HCT116 (cell line): ENCODE measurements at regions of chr20 and their contacts with region 1.

Region 1: DNA sequence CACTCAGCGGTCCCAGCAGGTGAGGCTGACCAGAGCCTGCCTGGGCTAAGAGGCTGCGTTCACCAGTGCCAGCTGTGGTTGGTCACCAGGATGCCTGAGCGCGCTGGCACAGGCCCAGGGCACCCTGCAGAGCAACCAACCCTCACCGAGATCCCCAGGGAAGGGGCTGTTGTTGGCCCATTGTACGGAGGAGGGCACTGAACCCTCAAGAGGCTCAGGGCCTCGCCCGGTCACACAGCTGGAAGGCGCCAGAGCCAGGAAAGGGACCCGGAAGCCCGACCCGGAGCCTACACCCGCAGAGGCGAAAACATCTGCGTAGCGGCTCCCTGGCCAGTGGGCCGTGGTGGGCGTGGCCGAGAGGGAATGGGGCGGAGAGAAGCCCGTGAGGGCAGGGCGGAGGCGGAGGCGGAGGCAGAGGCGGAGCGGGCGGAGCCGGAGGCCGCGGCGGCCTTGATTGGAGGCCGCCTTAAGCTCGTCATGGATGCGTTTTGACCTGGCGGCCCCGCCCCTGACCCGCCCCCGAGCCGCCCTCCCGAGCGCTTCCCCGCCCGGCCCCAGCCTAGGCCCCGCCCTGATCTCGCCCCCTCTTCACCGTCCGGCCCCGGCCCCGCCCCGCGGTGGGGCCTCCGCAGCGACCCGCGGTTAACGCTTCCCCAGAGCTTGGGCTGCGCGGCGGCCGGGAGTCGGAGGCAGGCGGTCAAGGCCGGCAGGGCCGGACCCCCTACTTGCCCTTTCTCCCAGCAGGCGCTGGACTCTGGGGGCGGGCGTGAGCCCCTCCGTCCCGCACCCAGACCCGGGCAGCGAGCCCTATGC is 2.2 kb upstream of the MRGBP start:
- DNase-seq: peak; percentile 93
- ATAC-seq: peak; percentile 79
- H3K4me3 ChIP-seq: peak overlapping the region; percentile 64 to 72
- H3K27ac ChIP-seq: peak overlapping the region; percentile 99
- H3K4me1 ChIP-seq: peaks cover 23 to 67% of the 10 kb centered on the region in 2 experiments
- H3K27me3 ChIP-seq: no peaks in the 10 kb centered on the region
- CTCF ChIP-seq: no peak
- POLR2A ChIP-seq: no peak
- RAD21 ChIP-seq: no peak

Region 2: DNA sequence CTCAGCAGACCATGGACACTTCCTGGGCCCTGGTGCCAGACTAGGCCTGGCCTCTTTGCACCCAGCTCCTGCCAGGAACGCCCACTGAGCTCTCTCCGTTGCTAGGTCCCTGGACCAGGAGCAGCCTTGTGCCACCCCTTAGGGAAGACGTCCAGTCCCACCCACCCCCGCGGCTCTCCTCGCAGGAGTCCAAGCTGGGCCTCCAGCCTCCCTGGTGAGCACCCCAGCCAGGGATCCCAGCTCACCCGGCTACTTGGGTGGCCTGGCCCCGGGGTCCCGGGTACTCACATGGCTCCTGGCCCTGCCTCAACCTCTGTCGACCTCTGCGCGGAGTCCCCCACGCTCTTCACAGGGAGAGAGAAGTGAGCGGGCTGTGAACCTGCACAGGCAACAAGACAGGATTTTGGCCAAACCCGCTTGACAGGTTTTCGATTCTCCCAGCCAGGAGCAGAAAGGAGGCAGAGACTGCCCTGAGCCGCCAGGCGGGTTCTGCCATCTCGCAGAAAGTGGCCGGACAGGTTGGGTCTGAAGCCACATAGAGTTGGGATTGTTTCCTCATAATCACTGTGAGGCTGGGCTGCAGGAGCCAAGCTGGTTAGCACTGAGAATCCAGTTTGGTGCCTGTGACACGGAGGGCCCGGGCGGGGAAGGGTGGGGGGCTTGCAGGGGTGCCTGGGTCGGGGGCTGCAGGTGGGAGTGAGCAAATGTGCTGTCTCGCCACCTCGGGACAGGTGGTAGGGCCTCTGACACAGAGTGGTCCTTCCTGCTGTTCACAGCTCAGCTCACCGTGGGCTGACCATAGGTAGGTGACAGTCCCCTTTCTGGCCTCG is 366.7 kb before region 1 on chr20 and contains the start of gene RBBP8NL:
- CTCF ChIA-PET with region 1: no interaction called
- POLR2A ChIA-PET with region 1: no interaction called
- RAD21 ChIA-PET with region 1: no interaction called
- intact Hi-C with region 1: no loop called
- DNase-seq: peak; percentile 77
- ATAC-seq: peak; percentile 89
- H3K4me3 ChIP-seq: peak within 1 kb of the TSS in 1 of 2 experiments; percentile 40; a peak in 2 of 4 replicates
- H3K27ac ChIP-seq: peak within 1 kb of the TSS; percentile 80
- H3K4me1 ChIP-seq: peaks cover 29 to 39% of the 10 kb centered on the region in 2 experiments
- H3K27me3 ChIP-seq: no peaks in the 10 kb centered on the region
- CTCF ChIP-seq: peak in 2 of 3 experiments; percentile 20 to 36; a peak in 3 of 6 replicates
- POLR2A ChIP-seq: no peak
- RAD21 ChIP-seq: no peak; the same call in 1 of the 2 replicates
- total RNA-seq, gene RBBP8NL: 0.59 TPM

Region 3: DNA sequence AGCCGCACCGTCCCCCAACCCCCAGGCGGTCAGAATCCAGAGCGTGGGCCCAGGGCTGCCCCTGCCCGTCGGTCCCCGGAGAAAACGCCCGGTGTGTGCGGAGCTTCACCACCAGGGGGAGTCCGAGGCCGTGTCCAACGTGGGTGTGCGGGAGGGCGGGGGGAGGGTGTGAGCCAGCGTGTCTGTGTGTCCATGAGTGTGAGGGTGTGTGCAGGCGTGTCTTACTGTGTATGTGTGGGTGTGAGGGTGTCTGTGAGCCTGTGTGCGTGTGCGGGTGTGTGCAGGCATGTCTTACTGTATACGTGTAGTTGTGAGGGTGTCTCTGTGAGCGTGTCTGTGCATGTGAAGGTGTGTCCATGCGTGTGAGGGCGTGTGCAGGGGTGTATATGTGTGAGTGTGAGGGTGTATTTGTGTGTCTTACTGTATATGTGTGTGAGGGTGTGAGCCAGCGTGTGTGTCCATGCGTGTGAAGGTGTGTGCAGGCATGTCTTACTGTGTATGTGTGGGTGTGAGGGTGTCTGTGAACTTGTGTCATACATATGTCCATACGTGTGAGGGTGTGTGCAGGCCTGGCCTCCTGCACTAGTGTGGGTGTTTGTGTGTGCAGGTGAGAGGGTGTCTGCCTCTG is 293.8 kb before region 1 on chr20:
- CTCF ChIA-PET with region 1: interaction called, 8 read pairs
- POLR2A ChIA-PET with region 1: no interaction called
- RAD21 ChIA-PET with region 1: no interaction called
- intact Hi-C with region 1: loop called (anchors 5 kb)
- DNase-seq: peak; percentile 21
- ATAC-seq: peak; percentile 88
- H3K4me3 ChIP-seq: no peak overlapping the region
- H3K27ac ChIP-seq: peak overlapping the region; percentile 15; the same call in 1 of the 2 replicates
- H3K4me1 ChIP-seq: peaks cover 6 to 17% of the 10 kb centered on the region in 2 experiments; a peak in 3 of 4 replicates
- H3K27me3 ChIP-seq: no peaks in the 10 kb centered on the region
- CTCF ChIP-seq: peak; percentile 82 to 95 (median 90)
- POLR2A ChIP-seq: no peak
- RAD21 ChIP-seq: peak; percentile 96

Region 4: DNA sequence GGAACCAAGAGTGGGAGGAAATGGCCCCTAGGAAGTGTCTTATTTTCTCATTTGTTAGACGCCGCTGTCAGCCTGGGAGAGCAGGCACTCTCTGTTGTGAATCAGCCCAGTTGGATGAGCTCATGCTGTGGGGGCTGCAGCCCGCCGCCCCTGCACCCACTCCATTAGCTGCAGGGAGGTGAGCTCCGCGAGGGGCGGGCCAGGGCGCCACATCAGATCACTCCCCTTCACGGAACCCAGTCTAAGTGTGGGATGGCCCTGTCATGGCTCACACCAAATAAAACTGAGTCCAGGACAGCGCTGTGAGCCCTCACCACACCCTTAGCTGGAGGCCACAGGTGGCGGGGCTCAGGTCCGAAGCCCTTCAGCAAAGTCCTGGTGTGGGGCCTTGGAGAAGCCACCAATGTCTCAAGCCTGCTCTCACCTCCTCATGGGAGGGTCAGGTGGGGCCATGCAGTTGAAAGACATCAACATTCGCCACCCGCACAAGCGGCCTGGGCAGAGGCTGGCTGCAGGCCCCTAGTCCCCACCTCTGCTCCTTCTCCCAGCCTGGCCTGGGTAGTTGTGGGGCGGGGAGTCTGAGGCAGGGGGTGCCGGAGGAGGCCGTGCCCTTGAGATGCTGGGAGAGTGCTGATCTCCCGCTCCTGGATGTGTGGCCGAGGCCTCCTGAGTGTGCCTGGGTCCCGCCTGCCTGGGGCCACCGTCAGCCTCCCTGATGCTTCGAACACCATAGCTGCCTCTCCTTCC is 218.0 kb before region 1 on chr20:
- CTCF ChIA-PET with region 1: no interaction called
- POLR2A ChIA-PET with region 1: no interaction called
- RAD21 ChIA-PET with region 1: no interaction called
- intact Hi-C with region 1: no loop called
- DNase-seq: no peak
- ATAC-seq: no peak
- H3K4me3 ChIP-seq: no peak overlapping the region
- H3K27ac ChIP-seq: no peak overlapping the region
- H3K4me1 ChIP-seq: peaks cover 3 to 9% of the 10 kb centered on the region in 2 experiments; a peak in 2 of 4 replicates
- H3K27me3 ChIP-seq: peaks cover 14% of the 10 kb centered on the region; the same call in 1 of the 2 replicates
- CTCF ChIP-seq: no peak
- POLR2A ChIP-seq: no peak
- RAD21 ChIP-seq: no peak

Region 5: DNA sequence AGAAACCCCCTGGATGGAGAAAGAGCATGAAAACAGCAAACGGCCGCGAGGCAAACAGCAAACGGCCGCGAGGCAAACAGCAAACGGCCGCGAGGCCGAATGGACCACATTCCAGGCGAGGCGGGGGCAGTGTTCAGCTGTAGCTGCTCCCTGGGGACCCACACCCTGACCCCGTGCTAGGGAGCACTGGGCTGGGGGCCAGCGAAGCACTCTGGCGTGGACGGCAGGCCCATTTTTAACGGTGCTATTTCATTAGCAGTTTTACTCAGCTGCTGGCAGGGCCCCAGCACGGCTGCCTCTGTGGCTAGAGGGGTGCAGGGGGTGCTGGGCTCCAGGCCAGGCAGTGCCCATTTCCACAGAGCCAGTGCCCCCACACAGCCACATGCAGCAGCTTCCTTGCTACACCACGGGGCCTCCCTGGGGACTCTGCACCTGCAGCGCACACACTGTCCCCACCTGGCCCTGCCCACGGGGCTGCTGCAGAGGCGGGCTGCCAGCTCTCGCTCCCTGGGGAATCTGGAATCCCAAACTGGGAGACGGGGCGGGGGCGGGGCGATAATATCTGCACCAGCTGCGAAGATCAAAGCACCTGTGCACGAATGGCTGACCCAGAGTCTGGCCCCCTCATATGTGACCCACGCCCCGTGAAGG is 187.4 kb before region 1 on chr20:
- CTCF ChIA-PET with region 1: no interaction called
- POLR2A ChIA-PET with region 1: no interaction called
- RAD21 ChIA-PET with region 1: no interaction called
- intact Hi-C with region 1: no loop called
- DNase-seq: no peak
- ATAC-seq: no peak
- H3K4me3 ChIP-seq: no peak overlapping the region
- H3K27ac ChIP-seq: no peak overlapping the region
- H3K4me1 ChIP-seq: no peaks in the 10 kb centered on the region; a peak in 1 of 4 replicates
- H3K27me3 ChIP-seq: no peaks in the 10 kb centered on the region
- CTCF ChIP-seq: no peak
- POLR2A ChIP-seq: no peak
- RAD21 ChIP-seq: no peak

Region 6: DNA sequence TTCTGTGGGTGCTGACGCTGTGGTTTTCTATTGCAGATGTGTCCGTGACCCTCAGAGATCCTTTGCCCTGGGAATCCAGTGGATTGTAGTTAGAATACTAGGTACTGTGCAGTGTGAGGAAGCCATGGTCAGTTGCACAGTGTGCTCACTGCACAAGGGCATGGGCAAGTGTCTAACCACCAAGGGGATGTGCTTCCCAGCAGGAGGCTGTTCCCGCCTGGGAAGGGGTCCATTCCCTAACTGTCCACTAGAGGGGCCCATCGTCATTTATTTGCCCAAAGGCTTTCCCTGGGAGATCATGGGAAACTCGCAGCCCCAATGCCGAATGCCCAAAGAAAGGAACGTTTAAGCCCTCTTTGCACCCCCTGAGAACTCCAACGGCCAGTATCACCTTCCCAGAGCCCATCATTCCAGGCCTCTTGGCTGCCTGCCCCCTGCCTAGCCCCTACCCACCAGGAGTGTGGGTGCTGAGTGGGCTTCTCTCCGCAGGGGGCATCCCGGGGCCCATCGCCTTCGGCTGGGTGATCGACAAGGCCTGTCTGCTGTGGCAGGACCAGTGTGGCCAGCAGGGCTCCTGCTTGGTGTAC is 125.6 kb before region 1 on chr20:
- CTCF ChIA-PET with region 1: interaction called, 8 read pairs
- POLR2A ChIA-PET with region 1: no interaction called
- RAD21 ChIA-PET with region 1: interaction called in 1 of 2 experiments, 3 read pairs
- intact Hi-C with region 1: loop called (anchors 1 kb)
- DNase-seq: peak; percentile 24
- ATAC-seq: peak; percentile 65
- H3K4me3 ChIP-seq: no peak overlapping the region
- H3K27ac ChIP-seq: peak overlapping the region; percentile 34; the same call in 1 of the 2 replicates
- H3K4me1 ChIP-seq: peaks cover 6 to 24% of the 10 kb centered on the region in 2 experiments; a peak in 2 of 4 replicates
- H3K27me3 ChIP-seq: no peaks in the 10 kb centered on the region
- CTCF ChIP-seq: peak; percentile 76 to 85 (median 81)
- POLR2A ChIP-seq: no peak
- RAD21 ChIP-seq: peak; percentile 89

Region 7: GRCh38 chr20:62734881-62735821 is 59.0 kb before region 1 on chr20:
- CTCF ChIA-PET with region 1: no interaction called
- POLR2A ChIA-PET with region 1: interaction called, 6 read pairs
- RAD21 ChIA-PET with region 1: interaction called, 4 read pairs
- intact Hi-C with region 1: loop called (anchors 2 kb)
- DNase-seq: peak; percentile 89
- ATAC-seq: peak; percentile 44
- H3K4me3 ChIP-seq: peak overlapping the region; percentile 38 to 43
- H3K27ac ChIP-seq: peak overlapping the region; percentile 100
- H3K4me1 ChIP-seq: peaks cover 86 to 100% of the 10 kb centered on the region in 2 experiments
- H3K27me3 ChIP-seq: no peaks in the 10 kb centered on the region
- CTCF ChIP-seq: peak in 2 of 3 experiments; percentile 19 to 21; a peak in 1 of 6 replicates
- POLR2A ChIP-seq: peak; percentile 51
- RAD21 ChIP-seq: no peak

Region 8: GRCh38 chr20:62808211-62808865 is 14.2 kb after region 1 on chr20:
- CTCF ChIA-PET with region 1: interaction called, 10 read pairs
- POLR2A ChIA-PET with region 1: interaction called, 7 read pairs
- RAD21 ChIA-PET with region 1: no interaction called
- intact Hi-C with region 1: no loop called
- DNase-seq: no peak
- ATAC-seq: peak; percentile 68
- H3K4me3 ChIP-seq: no peak overlapping the region
- H3K27ac ChIP-seq: peak overlapping the region; percentile 8; the same call in 1 of the 2 replicates
- H3K4me1 ChIP-seq: peaks cover 19 to 35% of the 10 kb centered on the region in 2 experiments; a peak in 3 of 4 replicates
- H3K27me3 ChIP-seq: no peaks in the 10 kb centered on the region
- CTCF ChIP-seq: peak in 2 of 3 experiments; percentile 88 to 94; a peak in 5 of 6 replicates
- POLR2A ChIP-seq: no peak
- RAD21 ChIP-seq: no peak; the same call in none of the 2 replicates